Activated CD8-positive, alpha-beta T cell treated with anti-CD3 and anti-CD28 coated beads for 36 hours (primary cell): ENCODE measurements at regions of chr5 and their contacts with region 1.

Region 1: DNA sequence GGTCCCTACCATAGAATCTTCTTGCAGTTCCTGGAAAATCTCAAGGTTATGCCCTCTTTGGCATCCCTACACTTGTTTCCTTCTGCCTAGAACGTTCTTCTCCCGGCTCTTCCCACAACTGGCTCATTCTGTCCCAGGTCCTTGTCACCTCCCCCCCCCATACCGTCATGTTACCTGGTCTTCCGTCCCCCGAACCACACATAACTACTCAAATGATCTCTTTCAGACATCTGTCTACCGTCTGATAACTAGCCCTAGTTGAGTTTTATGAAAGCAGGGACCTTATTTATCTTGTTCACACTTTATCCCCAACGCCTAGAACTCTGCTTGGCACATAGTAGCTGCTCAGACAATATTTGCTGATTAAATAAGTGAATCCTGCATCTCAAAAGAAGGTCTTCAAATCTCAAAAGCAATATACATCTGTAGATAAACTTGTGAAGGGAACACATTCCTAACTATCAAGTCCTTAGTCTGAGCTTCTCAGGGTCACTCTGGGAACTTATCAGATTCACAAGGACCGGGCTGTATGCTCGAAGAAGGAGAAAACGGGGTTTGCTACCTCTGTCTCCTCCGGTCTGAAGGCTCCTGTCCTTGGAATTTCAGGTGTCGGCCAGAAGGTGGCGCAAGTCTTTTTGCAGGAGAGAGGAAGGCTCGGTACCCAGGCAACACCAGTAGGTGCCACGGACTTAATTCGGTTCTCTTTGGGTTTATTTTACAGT is 30.0 kb downstream of the LCP2 start:
- DNase-seq: peak; percentile 84
- ATAC-seq: peak; percentile 26
- H3K4me3 Mint-ChIP-seq: peak overlapping the region; percentile 56
- H3K27ac Mint-ChIP-seq: peak overlapping the region; percentile 93
- H3K4me1 Mint-ChIP-seq: peaks cover 95% of the 10 kb centered on the region
- H3K27me3 Mint-ChIP-seq: no peaks in the 10 kb centered on the region
- CTCF ChIP-seq: peak; percentile 91

Region 2: DNA sequence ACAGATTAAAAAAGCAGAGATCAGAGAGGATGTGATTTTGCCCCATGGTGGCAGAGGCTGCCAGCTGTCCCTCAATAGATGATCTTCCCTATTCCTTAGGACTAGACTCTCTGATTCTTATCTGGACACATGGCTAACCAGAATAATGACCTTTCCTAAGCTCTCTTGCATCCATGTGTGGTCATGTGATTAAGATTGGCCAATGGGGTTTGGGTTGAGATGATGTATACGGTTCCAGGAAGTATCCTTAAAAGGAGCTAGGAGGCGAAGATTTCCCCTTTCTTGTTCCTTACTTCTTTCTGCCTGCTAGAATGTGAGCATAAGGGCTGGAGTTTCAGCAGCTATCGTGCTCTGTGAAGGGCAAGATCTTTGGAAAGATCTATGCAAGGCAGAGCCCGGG is 122.1 kb before region 1 on chr5:
- CTCF ChIA-PET with region 1: no interaction called
- POLR2A ChIA-PET with region 1: no interaction called
- intact Hi-C with region 1: no loop called
- DNase-seq: no peak
- ATAC-seq: no peak
- H3K4me3 Mint-ChIP-seq: no peak overlapping the region
- H3K27ac Mint-ChIP-seq: no peak overlapping the region
- H3K4me1 Mint-ChIP-seq: no peaks in the 10 kb centered on the region
- H3K27me3 Mint-ChIP-seq: peaks cover 6% of the 10 kb centered on the region
- CTCF ChIP-seq: no peak

Region 3: DNA sequence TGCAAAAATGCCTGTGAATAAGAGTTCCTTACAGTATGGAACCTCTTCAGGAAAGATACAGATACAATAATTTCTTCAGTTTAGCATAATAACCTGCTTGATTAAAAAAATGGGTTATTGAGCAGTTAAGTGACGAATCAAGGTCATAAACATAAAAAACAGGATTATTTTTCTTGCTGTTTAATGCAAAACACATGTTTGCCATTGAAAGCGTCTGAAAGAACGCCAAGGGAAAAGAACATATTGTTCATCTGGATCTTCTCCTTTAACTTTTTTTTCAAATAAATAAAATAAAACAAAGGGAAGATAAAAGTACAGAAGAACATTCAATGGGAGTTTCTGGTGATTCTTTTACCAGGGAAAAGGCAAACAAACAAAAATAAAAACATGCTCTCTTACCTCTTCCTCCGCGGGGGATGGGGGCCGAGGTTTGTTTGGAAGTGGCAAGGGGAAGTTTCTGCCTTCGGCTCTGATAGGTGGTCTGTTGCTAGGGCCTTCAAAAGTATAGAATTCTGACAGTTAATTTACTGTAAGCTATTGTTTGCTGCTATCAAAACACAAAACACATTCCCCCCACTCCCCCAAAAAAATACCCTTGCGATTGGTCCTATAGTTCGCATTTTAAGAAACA is 14.8 kb before region 1 on chr5:
- CTCF ChIA-PET with region 1: interaction called, 5 read pairs
- POLR2A ChIA-PET with region 1: interaction called, 24 read pairs
- intact Hi-C with region 1: no loop called
- DNase-seq: no peak
- ATAC-seq: no peak
- H3K4me3 Mint-ChIP-seq: no peak overlapping the region
- H3K27ac Mint-ChIP-seq: peak overlapping the region; percentile 74
- H3K4me1 Mint-ChIP-seq: peaks cover 86% of the 10 kb centered on the region
- H3K27me3 Mint-ChIP-seq: no peaks in the 10 kb centered on the region
- CTCF ChIP-seq: no peak

Region 4: GRCh38 chr5:170287532-170287931 is 19.9 kb after region 1 on chr5:
- CTCF ChIA-PET with region 1: interaction called, 180 read pairs
- POLR2A ChIA-PET with region 1: interaction called, 470 read pairs
- intact Hi-C with region 1: no loop called
- DNase-seq: peak; percentile 50
- ATAC-seq: peak; percentile 23
- H3K4me3 Mint-ChIP-seq: peak overlapping the region; percentile 47
- H3K27ac Mint-ChIP-seq: peak overlapping the region; percentile 96
- H3K4me1 Mint-ChIP-seq: peaks cover 100% of the 10 kb centered on the region
- H3K27me3 Mint-ChIP-seq: no peaks in the 10 kb centered on the region
- CTCF ChIP-seq: no peak

Region 5: GRCh38 chr5:170302653-170303501 is 35.3 kb after region 1 on chr5:
- CTCF ChIA-PET with region 1: interaction called, 180 read pairs
- POLR2A ChIA-PET with region 1: interaction called, 470 read pairs
- intact Hi-C with region 1: loop called (anchors 5 kb)
- DNase-seq: peak; percentile 71
- ATAC-seq: peak; percentile 87
- H3K4me3 Mint-ChIP-seq: peak overlapping the region; percentile 80
- H3K27ac Mint-ChIP-seq: peak overlapping the region; percentile 98
- H3K4me1 Mint-ChIP-seq: peaks cover 86% of the 10 kb centered on the region
- H3K27me3 Mint-ChIP-seq: no peaks in the 10 kb centered on the region
- CTCF ChIP-seq: peak; percentile 21

Region 6: DNA sequence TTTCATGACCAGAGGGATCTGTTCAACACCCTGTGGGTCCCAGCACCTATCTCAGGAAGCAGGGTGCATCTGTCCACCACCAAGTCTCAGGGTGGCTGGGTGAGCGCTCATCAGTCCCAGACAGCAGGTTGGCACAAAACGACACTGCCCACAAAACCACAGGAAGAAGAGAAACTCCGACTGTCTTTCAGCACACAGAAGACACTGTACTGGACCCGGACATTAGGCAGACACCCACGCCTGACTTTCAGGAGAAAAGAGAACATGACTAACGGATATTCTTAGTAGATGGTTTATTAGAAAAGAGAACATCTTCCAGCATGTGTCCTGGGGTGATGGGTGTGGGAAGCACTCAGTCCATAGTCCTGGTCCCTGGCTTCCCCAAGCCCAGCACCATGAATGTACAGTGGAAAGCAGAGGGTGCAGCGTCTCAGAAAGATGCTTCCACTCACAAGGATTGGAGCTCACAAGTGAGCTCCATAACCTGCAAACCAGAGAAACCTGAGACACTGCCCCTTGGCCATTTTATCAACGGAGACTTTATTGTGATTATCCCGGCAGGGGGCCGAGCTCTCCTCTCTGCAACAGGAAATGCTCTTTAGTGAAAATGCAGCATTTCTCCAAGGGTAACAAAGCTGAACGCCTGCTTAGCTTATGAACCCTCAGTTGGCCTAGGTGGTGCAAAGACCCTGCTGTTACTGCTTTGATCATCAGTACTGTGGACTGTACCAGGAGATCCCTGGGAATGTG is 65.7 kb after region 1 on chr5:
- CTCF ChIA-PET with region 1: interaction called, 132 read pairs
- POLR2A ChIA-PET with region 1: interaction called, 82 read pairs
- intact Hi-C with region 1: loop called (anchors 2 kb)
- DNase-seq: peak; percentile 90
- ATAC-seq: peak; percentile 35
- H3K4me3 Mint-ChIP-seq: no peak overlapping the region
- H3K27ac Mint-ChIP-seq: no peak overlapping the region
- H3K4me1 Mint-ChIP-seq: peaks cover 30% of the 10 kb centered on the region
- H3K27me3 Mint-ChIP-seq: no peaks in the 10 kb centered on the region
- CTCF ChIP-seq: no peak